Endothelial cell of umbilical vein (primary cell): ENCODE measurements at regions of chr12 and their contacts with region 1.

Region 1: DNA sequence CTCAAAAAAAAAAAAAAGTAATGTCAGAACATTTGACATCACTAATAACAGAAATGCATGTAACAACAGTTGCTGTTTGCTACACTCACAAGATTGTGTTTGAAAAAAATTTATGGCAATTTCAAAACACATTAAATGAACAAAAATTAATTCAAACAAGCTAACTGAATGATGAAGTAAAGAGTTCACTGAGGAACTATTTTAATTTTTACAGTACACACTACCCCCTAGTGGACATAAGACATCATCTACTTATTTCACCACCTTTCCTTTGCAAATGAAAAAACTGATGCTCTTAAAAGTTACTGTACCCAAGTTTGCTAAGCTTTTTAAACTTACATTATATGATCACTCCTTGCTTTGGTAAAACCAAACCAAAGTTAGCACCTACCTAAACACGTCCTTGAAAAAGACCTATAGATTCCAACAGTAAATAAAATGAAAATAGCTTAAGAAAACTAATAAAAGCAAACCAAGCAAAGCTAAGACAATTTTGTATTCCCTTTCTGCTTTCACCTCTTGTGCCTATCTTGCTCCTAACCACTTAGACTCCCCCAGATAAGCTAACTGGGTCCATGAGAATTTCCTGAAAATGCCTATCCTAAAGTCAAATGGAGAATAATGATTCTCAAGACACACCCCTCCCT is 22.2 kb downstream of the UBE2N start:
- DNase-seq: peak; percentile 76
- H3K4me3 ChIP-seq: no peak overlapping the region
- H3K27ac ChIP-seq: no peak overlapping the region
- H3K4me1 ChIP-seq: peaks cover 2% of the 10 kb centered on the region
- H3K27me3 ChIP-seq: no peaks in the 10 kb centered on the region
- CTCF ChIP-seq: peak; percentile 33 to 38
- POLR2A ChIP-seq: no peak

Region 2: DNA sequence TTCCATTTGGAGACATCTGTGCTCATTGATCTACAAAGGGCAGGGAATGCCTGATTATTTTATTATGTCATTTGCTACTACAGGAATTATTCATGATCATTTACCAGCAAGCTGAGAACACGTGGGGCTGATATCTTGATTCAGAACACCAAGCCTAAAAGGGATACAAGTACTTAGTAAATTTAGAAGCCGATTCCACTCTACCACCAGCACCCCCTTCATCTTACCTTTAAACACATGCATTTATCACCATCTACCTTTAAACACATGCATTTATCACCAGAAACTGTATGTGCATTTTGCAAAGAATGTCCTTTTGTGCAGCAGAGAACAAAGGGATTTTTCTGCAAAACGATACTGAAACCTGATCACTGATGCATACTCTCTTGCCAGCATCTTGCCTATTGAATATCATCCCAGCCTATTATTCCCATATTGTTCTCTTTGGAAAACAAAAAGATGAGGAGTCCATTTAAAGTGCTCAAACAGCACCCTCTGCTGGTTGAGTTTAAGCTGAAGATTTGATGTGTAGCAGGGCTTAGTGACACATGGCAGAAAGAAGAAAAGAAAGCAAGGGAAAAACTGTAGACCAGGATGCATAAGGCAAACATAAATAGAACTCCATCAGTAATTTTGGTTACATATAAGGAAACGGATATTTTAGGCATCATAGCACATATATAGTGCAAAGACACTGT is 849.3 kb before region 1 on chr12:
- CTCF ChIA-PET with region 1: interaction called, 4 read pairs
- POLR2A ChIA-PET with region 1: no interaction called
- dilution Hi-C with region 1: no loop called
- intact Hi-C with region 1: loop called (anchors 10 kb)
- DNase-seq: peak; percentile 87
- H3K4me3 ChIP-seq: no peak overlapping the region
- H3K27ac ChIP-seq: no peak overlapping the region
- H3K4me1 ChIP-seq: no peaks in the 10 kb centered on the region
- H3K27me3 ChIP-seq: no peaks in the 10 kb centered on the region
- CTCF ChIP-seq: peak; percentile 43 to 45
- POLR2A ChIP-seq: no peak

Region 3: DNA sequence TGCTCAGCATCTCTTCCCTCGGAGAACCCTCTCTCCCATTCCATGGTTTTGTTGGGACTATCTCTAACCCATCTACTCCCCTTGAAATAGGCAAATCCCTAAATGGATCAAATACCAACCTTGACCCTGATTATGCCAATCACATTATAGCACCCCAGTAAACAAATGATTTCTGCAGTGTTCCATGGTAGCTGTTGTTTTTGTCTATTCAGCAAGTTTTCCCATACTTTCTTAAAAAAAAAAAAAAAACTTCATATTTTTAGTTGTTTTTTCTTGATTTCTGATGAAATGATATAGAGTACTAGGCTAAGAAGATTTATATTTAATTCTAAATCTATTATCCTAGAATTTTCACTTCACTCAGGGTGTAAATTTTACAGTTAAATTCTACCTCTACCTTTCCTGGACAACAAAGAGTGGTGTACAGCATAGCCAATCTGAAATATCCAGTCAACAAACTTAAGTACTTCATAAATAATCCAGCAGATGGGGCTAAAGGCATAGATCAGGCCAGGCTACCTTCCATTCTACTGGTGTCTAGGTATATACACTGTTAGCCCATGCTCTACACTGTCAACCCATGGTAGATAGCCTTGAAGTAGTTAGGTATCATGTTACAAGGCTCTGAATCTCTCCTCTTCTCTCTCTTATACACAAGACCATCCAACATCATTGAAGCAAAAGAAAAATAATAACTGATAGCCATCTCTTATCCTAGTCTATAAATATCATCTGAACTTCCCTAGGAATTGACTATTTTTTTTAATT is 634.5 kb before region 1 on chr12:
- CTCF ChIA-PET with region 1: interaction called, 70 read pairs
- POLR2A ChIA-PET with region 1: no interaction called
- dilution Hi-C with region 1: no loop called
- intact Hi-C with region 1: loop called (anchors 1 kb)
- DNase-seq: peak; percentile 90
- H3K4me3 ChIP-seq: no peak overlapping the region
- H3K27ac ChIP-seq: no peak overlapping the region
- H3K4me1 ChIP-seq: no peaks in the 10 kb centered on the region
- H3K27me3 ChIP-seq: no peaks in the 10 kb centered on the region
- CTCF ChIP-seq: peak; percentile 26 to 28
- POLR2A ChIP-seq: no peak

Region 4: DNA sequence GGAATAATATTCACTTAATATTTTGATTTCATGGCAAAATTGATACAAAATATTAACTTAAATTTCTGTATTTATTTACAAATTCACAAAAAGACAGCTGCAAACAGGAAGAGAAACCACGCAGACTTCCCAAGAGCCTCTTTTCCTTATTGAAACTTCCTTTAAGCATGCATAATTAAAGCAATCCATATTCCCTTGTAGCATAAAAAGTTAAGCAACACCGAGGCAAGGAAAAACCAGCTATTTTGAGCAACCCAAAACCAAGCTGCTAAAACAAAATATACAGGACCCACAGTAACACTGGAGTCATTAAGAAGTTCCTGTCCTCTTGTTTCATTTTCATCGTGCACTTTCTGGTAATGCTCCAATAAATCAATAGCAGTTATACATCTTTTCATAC is 548.4 kb before region 1 on chr12:
- CTCF ChIA-PET with region 1: interaction called, 10 read pairs
- POLR2A ChIA-PET with region 1: no interaction called
- dilution Hi-C with region 1: no loop called
- intact Hi-C with region 1: no loop called
- DNase-seq: no peak
- H3K4me3 ChIP-seq: no peak overlapping the region
- H3K27ac ChIP-seq: no peak overlapping the region
- H3K4me1 ChIP-seq: no peaks in the 10 kb centered on the region
- H3K27me3 ChIP-seq: no peaks in the 10 kb centered on the region
- CTCF ChIP-seq: no peak
- POLR2A ChIP-seq: no peak

Region 5: GRCh38 chr12:93019975-93020630 is 399.4 kb before region 1 on chr12:
- CTCF ChIA-PET with region 1: interaction called, 10 read pairs
- POLR2A ChIA-PET with region 1: no interaction called
- dilution Hi-C with region 1: no loop called
- intact Hi-C with region 1: no loop called
- DNase-seq: peak; percentile 62
- H3K4me3 ChIP-seq: no peak overlapping the region
- H3K27ac ChIP-seq: peak overlapping the region; percentile 46
- H3K4me1 ChIP-seq: peaks cover 39% of the 10 kb centered on the region
- H3K27me3 ChIP-seq: no peaks in the 10 kb centered on the region
- CTCF ChIP-seq: no peak
- POLR2A ChIP-seq: no peak

Region 6: DNA sequence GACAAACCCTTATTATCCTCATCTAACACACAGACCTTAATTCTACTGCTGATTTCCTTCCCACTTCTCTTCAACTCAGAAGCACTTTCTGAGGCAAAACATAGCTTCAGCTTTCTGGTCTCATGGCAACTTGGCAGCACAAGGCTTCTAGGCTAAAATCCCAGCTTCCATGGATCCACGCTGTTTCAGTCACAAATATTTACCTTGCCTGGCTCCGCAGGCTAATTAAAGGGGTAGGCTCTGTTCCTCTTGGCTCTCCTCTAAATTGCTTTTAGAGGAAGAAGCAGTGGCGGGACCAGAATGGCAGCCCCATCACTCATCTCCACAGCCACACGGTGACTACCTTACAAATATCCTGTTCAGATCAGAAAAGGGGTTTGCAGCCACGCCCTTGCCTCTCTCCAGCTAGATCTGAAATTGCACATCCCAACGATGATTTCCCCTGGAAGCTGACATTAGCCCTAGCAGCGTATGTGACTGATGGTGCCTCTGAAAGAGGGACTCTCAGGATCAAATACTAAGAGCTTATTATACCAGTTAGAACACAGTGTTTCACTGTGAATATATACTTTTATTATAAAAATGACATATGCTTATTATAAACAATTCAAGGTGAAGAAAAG is 263.3 kb before region 1 on chr12:
- CTCF ChIA-PET with region 1: no interaction called
- POLR2A ChIA-PET with region 1: no interaction called
- dilution Hi-C with region 1: no loop called
- intact Hi-C with region 1: no loop called
- DNase-seq: no peak
- H3K4me3 ChIP-seq: no peak overlapping the region
- H3K27ac ChIP-seq: no peak overlapping the region
- H3K4me1 ChIP-seq: no peaks in the 10 kb centered on the region
- H3K27me3 ChIP-seq: no peaks in the 10 kb centered on the region
- CTCF ChIP-seq: no peak
- POLR2A ChIP-seq: no peak

Region 7: DNA sequence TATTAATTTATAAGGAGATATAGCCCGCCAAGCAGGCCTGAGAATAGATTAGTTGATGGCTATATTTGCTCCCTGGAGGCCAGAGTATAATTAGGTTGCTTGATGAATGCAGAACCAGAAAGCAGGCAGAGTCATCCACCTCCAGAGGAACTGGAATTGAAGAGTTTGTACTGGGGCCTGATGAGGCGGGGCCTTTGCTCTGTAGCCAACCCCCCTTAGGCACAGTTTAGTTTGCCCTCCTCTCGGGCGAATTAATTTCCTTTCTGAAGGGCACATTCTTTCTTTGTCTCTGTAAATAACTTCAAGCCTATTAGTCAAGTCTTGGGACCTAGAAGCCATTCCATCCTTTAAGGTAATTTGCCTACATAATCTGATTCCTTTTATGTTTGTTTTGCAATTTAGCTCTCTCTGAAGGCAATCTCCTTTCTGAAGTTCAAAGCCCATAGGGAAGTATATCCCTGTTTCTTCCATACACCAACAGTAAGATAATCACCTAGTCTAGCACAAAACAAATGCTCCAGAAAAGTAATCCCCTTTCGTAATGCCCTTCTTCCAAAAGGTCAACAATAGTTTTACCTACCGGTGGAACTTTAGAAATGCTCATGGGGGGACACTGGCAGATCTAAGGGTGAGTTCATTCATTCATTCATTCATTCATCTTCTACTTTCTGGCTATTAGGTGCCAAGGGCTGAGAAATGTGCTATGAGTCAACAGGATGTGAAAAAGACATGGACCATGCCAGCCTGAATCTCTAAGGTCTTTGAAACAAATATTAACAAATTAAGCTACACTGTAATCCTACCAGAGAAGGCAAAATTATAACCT is 126.6 kb before region 1 on chr12:
- CTCF ChIA-PET with region 1: no interaction called
- POLR2A ChIA-PET with region 1: no interaction called
- dilution Hi-C with region 1: no loop called
- intact Hi-C with region 1: no loop called
- DNase-seq: no peak
- H3K4me3 ChIP-seq: no peak overlapping the region
- H3K27ac ChIP-seq: no peak overlapping the region
- H3K4me1 ChIP-seq: no peaks in the 10 kb centered on the region
- H3K27me3 ChIP-seq: no peaks in the 10 kb centered on the region
- CTCF ChIP-seq: no peak
- POLR2A ChIP-seq: no peak

Region 8: GRCh38 chr12:93378373-93379325 is 40.9 kb before region 1 on chr12:
- CTCF ChIA-PET with region 1: interaction called, 18 read pairs
- POLR2A ChIA-PET with region 1: no interaction called
- dilution Hi-C with region 1: no loop called
- intact Hi-C with region 1: no loop called
- DNase-seq: peak; percentile 52
- H3K4me3 ChIP-seq: peak overlapping the region; percentile 71 to 99 (median 95)
- H3K27ac ChIP-seq: peak overlapping the region; percentile 79
- H3K4me1 ChIP-seq: peaks cover 29% of the 10 kb centered on the region
- H3K27me3 ChIP-seq: no peaks in the 10 kb centered on the region
- CTCF ChIP-seq: no peak
- POLR2A ChIP-seq: no peak

Region 9: DNA sequence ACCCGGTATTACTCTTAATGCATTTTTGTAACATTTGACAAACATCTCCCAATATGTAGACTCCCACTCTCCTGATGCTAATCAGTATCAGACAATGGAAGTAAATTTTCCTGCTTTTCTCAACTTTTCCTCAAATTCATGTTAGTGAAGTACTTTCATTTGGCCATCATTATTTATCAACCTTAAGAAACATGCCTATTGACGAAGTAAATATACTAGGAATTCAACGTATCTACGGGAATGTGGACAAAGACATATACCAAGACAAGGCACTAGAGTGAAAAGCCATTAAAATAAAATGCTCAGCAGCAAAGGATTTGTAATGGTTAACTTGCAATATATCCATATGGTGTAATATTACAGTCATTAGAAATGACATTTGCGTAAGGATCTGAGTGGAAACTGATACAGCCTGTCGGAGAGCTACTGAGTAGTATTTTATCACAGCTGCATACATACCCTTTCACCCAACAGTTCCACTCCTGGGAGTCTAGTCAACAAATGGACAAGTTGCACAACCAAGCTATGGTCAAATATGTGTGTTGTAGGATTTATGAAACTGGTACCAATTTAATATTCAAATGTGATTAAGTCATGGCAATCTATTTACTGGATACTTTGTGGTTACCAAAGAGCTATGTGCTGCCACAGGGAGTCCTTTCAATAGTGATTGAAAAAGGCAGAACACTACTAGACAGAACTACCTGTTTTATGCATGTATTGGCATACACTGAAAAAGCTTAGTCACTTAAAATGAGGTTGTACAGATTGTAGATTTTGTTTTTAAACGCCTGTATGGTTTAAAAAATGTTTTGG is 15.3 kb before region 1 on chr12:
- CTCF ChIA-PET with region 1: interaction called, 12 read pairs
- POLR2A ChIA-PET with region 1: no interaction called
- dilution Hi-C with region 1: no loop called
- intact Hi-C with region 1: no loop called
- DNase-seq: no peak
- H3K4me3 ChIP-seq: no peak overlapping the region
- H3K27ac ChIP-seq: no peak overlapping the region
- H3K4me1 ChIP-seq: peaks cover 5% of the 10 kb centered on the region
- H3K27me3 ChIP-seq: no peaks in the 10 kb centered on the region
- CTCF ChIP-seq: no peak
- POLR2A ChIP-seq: no peak